ENCODE measurements at regions of chr11 and their contacts with region 1.

Region 1: GRCh38 chr11:10857709-10858438 is at the start of gene ZBED5:
- DNase-seq: peak; percentile 91 to 98 (median 95)
- ATAC-seq: peak; percentile 88 to 90
- H3K4me3 Mint-ChIP-seq: peak within 1 kb of the TSS; percentile 96 to 100 (median 100)
- H3K27ac Mint-ChIP-seq: peak within 1 kb of the TSS; percentile 98 to 100 (median 100)
- H3K4me1 Mint-ChIP-seq: peaks cover 20 to 58% (median 56%) of the 10 kb centered on the region in 4 donors
- H3K27me3 Mint-ChIP-seq: no peaks in the 10 kb centered on the region
- polyA plus RNA-seq, gene ZBED5: 14.6 to 18.6 (median 17.0) TPM

Region 2: GRCh38 chr11:10750838-10751580 is 106.9 kb before region 1 on chr11 and contains the start of gene CTR9:
- POLR2A ChIA-PET with region 1: interaction called, 11 read pairs
- DNase-seq: peak; percentile 83 to 93 (median 88)
- ATAC-seq: peak; percentile 90 to 93
- H3K4me3 Mint-ChIP-seq: peak within 1 kb of the TSS; percentile 93 to 97 (median 96)
- H3K27ac Mint-ChIP-seq: peak within 1 kb of the TSS; percentile 94 to 98 (median 95)
- H3K4me1 Mint-ChIP-seq: peaks cover 7 to 32% (median 24%) of the 10 kb centered on the region in 4 donors
- H3K27me3 Mint-ChIP-seq: no peaks in the 10 kb centered on the region
- polyA plus RNA-seq, gene CTR9: 53.2 to 66.8 (median 53.7) TPM

Region 3: DNA sequence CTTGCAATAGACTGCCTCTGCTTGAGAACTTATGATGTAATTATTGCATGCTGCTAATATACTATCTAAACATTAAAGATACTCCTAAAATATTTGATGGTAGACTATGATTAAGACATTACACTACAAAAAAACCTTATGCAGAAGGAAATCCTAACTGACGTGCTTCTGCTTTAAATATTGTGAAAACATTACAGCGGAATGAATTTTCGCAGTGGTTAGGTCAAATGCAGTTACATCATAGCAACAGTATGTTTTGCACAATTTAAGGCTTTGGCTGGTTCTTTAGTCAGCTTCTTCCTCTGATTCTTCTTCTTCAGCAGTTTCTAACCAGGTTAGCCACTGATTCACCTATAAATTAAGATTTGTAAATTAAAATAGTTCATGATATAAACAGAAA is 60.3 kb before region 1 on chr11:
- POLR2A ChIA-PET with region 1: interaction called, 13 read pairs
- DNase-seq: no peak
- ATAC-seq: no peak
- H3K4me3 Mint-ChIP-seq: no peak overlapping the region
- H3K27ac Mint-ChIP-seq: peak overlapping the region in 5 of 10 donors; percentile 12 to 66 (median 44)
- H3K4me1 Mint-ChIP-seq: peaks cover 31 to 74% (median 65%) of the 10 kb centered on the region in 4 donors
- H3K27me3 Mint-ChIP-seq: peaks cover 0 to 7% (median 4%) of the 10 kb centered on the region in 5 donors

Region 4: DNA sequence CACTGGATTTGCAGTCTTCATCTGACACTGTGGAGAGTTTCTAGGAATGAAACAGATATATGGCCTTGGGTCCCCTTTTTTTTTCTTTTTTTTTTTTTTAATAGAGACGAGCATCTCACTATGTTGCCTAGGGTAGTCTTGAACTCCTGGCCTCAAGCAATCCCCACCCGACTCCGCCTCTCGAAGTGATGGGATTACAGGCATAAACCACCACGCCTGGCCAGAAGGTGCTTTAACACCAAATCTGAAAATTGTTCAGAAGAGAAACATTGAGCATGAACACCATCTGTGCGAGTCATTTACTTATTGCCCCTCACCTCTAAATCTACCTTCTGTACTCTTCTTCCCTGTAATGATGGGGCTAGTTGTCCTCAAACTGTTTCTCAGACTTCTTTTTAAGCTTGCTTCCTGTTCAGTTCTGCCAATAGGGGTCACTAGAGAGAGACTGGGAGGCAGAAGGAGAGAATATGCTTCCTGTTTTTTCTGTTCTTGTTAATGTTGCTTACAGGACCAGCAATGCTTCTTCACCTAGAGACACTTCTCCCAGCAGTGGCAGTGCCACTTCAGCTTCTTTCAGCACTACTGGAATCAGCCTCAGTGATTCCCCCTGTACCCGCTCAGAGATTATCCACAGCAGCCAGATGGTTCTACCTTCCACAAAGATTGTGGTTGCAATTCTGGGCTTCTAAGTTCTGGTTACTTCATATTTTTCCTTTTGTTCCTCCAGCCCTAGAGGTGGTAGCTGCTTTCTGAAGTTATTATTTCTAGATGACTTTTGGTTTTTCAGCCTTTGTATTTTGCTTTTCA is 20.7 kb after region 1 on chr11:
- POLR2A ChIA-PET with region 1: interaction called, 20 read pairs
- DNase-seq: peak in 6 of 10 donors; percentile 4 to 63 (median 46)
- ATAC-seq: peak; percentile 66 to 79
- H3K4me3 Mint-ChIP-seq: peak overlapping the region in 2 of 10 donors; percentile 8 to 25
- H3K27ac Mint-ChIP-seq: peak overlapping the region in 6 of 10 donors; percentile 23 to 82 (median 64)
- H3K4me1 Mint-ChIP-seq: peaks cover 11 to 28% (median 17%) of the 10 kb centered on the region in 4 donors
- H3K27me3 Mint-ChIP-seq: no peaks in the 10 kb centered on the region

Region 5: GRCh38 chr11:10899121-10899830 is 41.4 kb after region 1 on chr11:
- POLR2A ChIA-PET with region 1: interaction called, 11 read pairs
- DNase-seq: no peak
- ATAC-seq: peak in 1 of 2 donors; percentile 26
- H3K4me3 Mint-ChIP-seq: peak overlapping the region in 1 of 10 donors; percentile 64
- H3K27ac Mint-ChIP-seq: peak overlapping the region in 5 of 10 donors; percentile 14 to 96 (median 29)
- H3K4me1 Mint-ChIP-seq: peaks cover 0 to 26% (median 9%) of the 10 kb centered on the region in 4 donors
- H3K27me3 Mint-ChIP-seq: peaks cover 0 to 7% (median 3%) of the 10 kb centered on the region in 5 donors

Region 6: DNA sequence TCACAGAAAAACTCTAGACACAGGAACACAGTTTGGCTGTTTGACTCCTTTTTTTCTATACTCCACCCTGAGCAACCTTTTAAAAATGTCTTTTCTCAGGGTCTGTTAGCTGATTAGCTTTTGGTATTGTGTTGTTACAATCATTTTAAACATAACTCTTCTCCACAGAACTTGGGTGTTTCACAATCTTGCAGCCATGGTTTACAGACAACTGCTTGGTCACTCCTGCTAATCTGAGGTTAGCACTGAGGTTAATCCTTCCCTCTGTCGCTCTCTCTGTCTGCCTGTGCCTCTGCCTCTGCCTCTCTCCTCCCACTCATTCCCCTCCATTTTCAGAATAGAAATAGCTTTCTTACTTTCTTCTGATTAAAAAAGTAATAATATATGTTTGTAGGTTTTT is 62.3 kb after region 1 on chr11:
- POLR2A ChIA-PET with region 1: no interaction called
- DNase-seq: no peak
- ATAC-seq: no peak
- H3K4me3 Mint-ChIP-seq: no peak overlapping the region
- H3K27ac Mint-ChIP-seq: no peak overlapping the region
- H3K4me1 Mint-ChIP-seq: peaks cover 0 to 2% (median 0%) of the 10 kb centered on the region in 4 donors
- H3K27me3 Mint-ChIP-seq: peaks cover 0 to 6% (median 0%) of the 10 kb centered on the region in 5 donors

Region 7: DNA sequence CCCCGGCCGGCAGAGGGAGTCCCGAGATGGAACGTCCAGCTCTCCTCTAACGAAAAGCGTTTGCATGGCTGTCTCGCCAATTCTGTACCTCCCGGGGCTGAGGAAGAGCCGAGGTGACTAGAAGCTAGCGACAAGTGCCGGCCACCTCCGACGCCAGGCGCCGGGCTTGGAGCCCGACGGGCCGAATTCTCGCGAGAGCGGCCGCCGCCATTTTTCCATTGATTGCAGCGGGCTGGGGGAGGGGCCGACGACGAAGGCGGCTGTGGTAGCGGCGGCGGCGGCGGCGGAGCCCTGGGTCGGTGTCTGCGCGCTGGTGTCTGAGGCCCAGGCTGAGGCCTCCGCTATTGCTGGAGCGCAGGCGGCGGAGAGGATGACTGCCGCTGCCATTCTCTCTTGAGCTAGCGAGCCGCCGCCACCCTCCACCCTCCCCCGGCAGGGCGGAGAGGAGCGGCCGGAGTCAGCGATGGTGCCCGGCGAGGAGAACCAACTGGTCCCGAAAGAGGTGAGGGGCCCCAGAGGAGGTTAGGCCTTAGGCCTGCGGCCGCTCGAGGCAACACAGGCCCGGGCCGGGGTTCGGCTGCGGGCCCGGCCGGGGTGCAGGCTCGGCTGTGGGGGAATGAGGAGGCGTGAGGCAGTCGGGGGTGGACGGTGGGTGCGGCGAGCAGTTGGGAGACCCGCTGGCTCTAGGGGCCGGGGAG is 984.0 kb after region 1 on chr11 and contains the start of gene USP47:
- POLR2A ChIA-PET with region 1: interaction called, 11 read pairs
- DNase-seq: peak; percentile 90 to 97 (median 96)
- ATAC-seq: peak; percentile 83 to 84
- H3K4me3 Mint-ChIP-seq: no peak within 1 kb of the TSS
- H3K27ac Mint-ChIP-seq: no peak within 1 kb of the TSS
- H3K4me1 Mint-ChIP-seq: peaks cover 3 to 25% (median 9%) of the 10 kb centered on the region in 4 donors
- H3K27me3 Mint-ChIP-seq: peaks cover 4 to 13% (median 7%) of the 10 kb centered on the region in 5 donors
- polyA plus RNA-seq, gene USP47: 38.2 to 54.3 (median 40.1) TPM

Measured in naive thymus-derived CD8-positive, alpha-beta T cell (primary cell).